ENCODE measurements at regions of chr7 and their contacts with region 1.

Region 1: GRCh38 chr7:99116144-99116543 is 27.8 kb downstream of the SMURF1 start:
- DNase-seq: no peak
- H3K4me3 ChIP-seq: no peak overlapping the region
- H3K27ac ChIP-seq: no peak overlapping the region
- H3K4me1 ChIP-seq: peaks cover 35% of the 10 kb centered on the region
- H3K27me3 ChIP-seq: no peaks in the 10 kb centered on the region
- CTCF ChIP-seq: no peak

Region 2: GRCh38 chr7:99267481-99267840 is 151.3 kb after region 1 on chr7:
- CTCF ChIA-PET with region 1: no interaction called
- POLR2A ChIA-PET with region 1: interaction called, 10 read pairs
- intact Hi-C with region 1: no loop called
- DNase-seq: peak; percentile 79 to 93
- H3K4me3 ChIP-seq: no peak overlapping the region
- H3K27ac ChIP-seq: peak overlapping the region; percentile 90
- H3K4me1 ChIP-seq: peaks cover 41% of the 10 kb centered on the region
- H3K27me3 ChIP-seq: no peaks in the 10 kb centered on the region
- CTCF ChIP-seq: no peak